Activated naive CD4-positive, alpha-beta T cell treated with anti-CD3 and anti-CD28 coated beads for 36 hours (primary cell): ENCODE measurements at regions of chr7 and their contacts with region 1.

Region 1: DNA sequence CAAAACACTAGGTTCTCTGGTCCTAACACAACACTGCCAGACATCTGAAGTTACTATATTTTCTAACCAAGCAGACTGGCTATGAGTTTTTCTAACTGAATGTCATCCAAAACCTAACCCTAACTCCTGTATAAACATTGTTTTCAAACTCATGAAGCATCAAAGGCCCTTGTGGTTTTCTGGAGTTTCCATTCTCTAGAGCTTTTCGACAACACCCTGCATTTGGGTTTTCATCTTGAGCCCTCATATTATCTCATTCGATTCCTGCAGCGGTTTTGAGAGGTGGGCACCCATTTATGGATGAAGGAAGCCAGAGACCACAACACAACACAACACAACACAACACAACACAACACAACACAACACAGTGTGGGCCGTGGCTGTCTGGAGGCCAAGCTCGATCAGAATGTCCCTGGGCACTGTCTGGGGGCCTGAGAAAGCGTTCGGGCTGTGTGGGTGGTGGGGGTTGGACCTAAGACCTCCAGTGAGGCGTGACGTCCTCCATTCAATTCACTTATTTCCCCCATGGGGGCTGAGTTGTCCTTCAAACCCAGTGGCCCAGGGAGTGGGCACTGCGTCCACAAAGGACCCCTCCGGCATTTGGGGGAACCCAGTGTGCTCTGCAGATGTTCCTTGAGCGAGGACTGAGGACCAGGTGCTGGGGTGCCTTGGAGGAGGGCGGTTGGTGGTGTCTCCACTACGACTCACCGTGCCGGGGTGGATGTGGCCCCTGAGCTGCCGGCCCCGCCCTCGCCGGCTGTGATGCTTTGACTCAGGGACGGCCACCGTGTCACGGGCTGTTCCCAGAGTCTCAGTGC is 490.4 kb downstream of the DNAJB6 start:
- DNase-seq: peak; percentile 63
- H3K4me3 Mint-ChIP-seq: no peak overlapping the region
- H3K27ac Mint-ChIP-seq: peak overlapping the region; percentile 39
- H3K4me1 Mint-ChIP-seq: peaks cover 31% of the 10 kb centered on the region
- H3K27me3 Mint-ChIP-seq: no peaks in the 10 kb centered on the region

Region 2: DNA sequence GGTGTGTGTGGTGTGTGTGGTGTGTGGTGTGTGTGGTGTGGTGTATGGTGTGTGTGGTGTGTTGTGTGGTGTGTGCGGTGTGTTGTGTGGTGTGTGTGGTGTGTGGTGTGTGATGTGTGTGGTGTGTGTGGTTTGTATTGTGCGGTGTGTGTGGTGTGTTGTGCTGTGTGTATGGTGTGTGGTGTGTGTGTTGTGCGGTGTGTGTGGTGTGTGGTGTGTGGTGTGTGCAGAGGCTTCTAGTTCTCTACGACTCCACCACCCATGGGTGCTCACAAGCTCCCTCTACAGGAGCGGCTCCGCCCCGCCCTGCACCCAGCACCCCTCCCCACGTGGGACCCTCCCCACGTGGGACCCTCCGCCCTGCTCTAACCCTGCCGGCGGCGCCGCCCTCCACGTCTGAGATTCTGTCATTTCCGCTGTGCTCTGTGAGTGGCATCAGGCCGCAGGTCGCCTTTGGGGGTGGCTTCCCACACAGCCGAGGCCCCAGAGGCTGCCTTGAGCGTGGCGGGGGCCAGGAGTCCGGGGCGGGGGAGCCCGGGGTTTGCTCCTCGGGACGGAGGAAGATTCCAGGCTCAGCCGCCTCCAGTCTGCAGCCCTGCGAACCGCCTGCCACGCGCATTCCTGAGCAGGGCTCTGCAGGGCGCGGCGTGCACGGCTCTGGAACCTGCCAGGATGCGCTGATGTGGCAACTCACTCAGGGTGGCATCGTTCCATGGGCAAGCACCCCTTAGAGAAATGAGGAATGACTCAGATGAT is 527.5 kb before region 1 on chr7:
- CTCF ChIA-PET with region 1: no interaction called
- intact Hi-C with region 1: loop called (anchors 10 kb)
- DNase-seq: no peak
- H3K4me3 Mint-ChIP-seq: no peak overlapping the region
- H3K27ac Mint-ChIP-seq: no peak overlapping the region
- H3K4me1 Mint-ChIP-seq: peaks cover 32% of the 10 kb centered on the region
- H3K27me3 Mint-ChIP-seq: no peaks in the 10 kb centered on the region

Region 3: GRCh38 chr7:157851501-157852067 is 24.3 kb after region 1 on chr7:
- CTCF ChIA-PET with region 1: interaction called, 3 read pairs
- intact Hi-C with region 1: loop called (anchors 1 kb)
- DNase-seq: peak; percentile 93
- H3K4me3 Mint-ChIP-seq: peak overlapping the region; percentile 56
- H3K27ac Mint-ChIP-seq: peak overlapping the region; percentile 74
- H3K4me1 Mint-ChIP-seq: peaks cover 13% of the 10 kb centered on the region
- H3K27me3 Mint-ChIP-seq: no peaks in the 10 kb centered on the region

Region 4: DNA sequence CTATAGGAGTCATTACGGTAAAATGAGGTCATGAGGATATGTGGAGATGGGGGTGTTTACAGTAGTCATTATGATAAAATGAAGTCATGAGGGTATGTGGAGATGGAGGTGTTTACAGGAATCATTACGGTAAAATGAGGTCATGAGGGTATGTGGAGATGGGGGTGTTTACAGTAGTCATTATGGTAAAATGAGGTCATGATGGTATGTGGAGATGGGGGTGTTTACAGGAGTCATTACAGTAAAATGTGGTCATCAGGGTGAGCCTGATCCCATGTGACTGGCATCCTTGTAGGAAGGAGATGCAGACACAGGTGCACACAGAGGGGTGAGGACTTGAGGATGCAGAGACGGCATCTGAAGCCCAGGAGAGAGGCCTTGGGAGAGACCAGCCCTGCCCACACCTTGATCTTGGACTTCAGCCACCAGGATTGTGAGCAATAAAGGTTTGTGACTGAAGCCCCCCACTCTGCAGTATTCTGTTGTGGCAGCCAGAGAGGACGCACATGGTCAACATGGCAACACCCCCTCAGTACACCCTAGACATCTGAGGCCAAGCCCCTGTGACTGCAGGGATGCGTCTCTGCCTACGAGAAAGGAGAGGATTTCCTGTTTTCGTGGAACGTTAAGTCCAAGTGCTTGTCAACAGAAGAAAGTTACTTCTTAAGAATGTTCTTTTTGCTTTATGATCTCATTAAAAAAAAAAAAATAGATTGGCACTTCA is 54.0 kb after region 1 on chr7:
- CTCF ChIA-PET with region 1: no interaction called
- intact Hi-C with region 1: loop called (anchors 1 kb)
- DNase-seq: peak; percentile 48
- H3K4me3 Mint-ChIP-seq: no peak overlapping the region
- H3K27ac Mint-ChIP-seq: peak overlapping the region; percentile 57
- H3K4me1 Mint-ChIP-seq: no peaks in the 10 kb centered on the region
- H3K27me3 Mint-ChIP-seq: no peaks in the 10 kb centered on the region

Region 5: DNA sequence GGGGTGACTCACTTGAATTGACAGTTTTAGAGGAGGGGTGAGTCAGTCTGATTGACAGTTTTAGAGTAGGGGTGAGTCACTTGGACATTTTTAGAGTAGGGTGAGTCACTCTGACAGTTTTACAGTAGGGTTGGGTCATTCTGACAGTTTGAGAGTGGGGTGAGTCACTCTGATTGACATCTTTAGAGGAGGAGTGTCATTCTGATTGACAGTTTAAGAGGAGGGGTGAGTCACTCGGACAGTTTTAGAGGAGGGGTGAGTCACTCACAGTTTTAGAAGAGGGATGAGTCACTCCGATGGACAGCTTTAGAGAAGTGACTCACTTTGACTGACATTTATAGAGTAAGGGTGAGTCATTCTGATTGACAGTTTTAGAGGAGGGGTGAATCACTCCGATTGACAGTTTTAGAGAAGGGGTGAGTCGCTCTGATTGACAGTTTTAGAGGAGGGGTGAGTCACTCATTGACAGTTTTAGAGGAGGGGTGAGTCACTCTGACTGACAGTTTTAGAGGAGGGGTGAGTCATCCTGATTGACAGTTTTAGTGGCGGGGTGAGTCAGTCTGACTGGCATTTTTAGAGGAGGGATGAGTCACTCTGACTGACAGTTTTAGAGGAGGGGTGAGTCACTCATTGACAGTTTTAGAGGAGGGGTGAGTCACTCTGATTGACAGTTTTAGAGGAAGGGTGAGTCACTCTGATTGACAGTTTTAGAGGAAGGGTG is 105.4 kb after region 1 on chr7:
- CTCF ChIA-PET with region 1: no interaction called
- intact Hi-C with region 1: loop called (anchors 5 kb)
- DNase-seq: peak; percentile 31
- H3K4me3 Mint-ChIP-seq: peak overlapping the region; percentile 26
- H3K27ac Mint-ChIP-seq: peak overlapping the region; percentile 95
- H3K4me1 Mint-ChIP-seq: peaks cover 4% of the 10 kb centered on the region
- H3K27me3 Mint-ChIP-seq: peaks cover 7% of the 10 kb centered on the region

Region 6: DNA sequence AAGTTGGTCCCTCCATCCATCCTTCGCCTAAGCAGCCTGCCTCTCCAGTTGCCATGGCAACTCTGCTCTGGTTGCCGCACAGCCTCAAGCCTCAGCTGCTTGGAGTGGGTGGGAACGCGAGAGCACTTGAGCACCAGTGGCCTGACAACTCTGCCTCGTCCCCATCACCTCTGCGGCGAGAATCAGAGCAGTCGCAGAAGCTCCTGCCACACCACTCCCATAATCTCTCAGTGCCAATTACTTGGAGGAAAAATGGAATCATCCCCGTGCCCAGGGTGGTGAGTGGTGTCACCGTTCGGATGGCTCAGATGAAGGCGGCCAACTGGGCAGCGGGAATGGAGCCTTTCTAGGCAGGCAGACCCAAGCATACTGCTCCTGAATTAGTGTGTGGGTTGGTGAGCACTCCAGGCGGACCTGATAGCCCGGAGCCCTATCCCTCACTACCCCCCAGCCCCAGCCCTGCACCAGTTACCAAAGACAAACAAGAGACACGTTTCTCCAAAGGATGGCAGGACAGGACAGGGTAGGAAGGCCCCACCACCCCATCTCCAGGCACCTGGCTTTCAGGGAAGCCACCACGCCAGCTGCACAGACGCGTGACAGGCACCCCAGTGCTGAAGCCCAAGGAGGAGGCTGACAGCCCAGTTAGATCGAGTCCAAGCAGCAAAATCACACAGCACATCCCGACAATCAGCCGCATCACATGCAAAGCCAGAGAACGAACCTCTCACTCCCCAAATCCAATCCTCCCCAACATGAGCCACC is 425.0 kb after region 1 on chr7:
- CTCF ChIA-PET with region 1: no interaction called
- intact Hi-C with region 1: no loop called
- DNase-seq: no peak
- H3K4me3 Mint-ChIP-seq: no peak overlapping the region
- H3K27ac Mint-ChIP-seq: no peak overlapping the region
- H3K4me1 Mint-ChIP-seq: no peaks in the 10 kb centered on the region
- H3K27me3 Mint-ChIP-seq: no peaks in the 10 kb centered on the region